Activated naive CD4-positive, alpha-beta T cell treated with anti-CD3 and anti-CD28 coated beads for 36 hours (primary cell): ENCODE measurements at regions of chr5 and their contacts with region 1.

Region 1: GRCh38 chr5:175170899-175171298 is 273.1 kb downstream of the DRD1 start:
- DNase-seq: no peak
- H3K4me3 Mint-ChIP-seq: no peak overlapping the region
- H3K27ac Mint-ChIP-seq: no peak overlapping the region
- H3K4me1 Mint-ChIP-seq: no peaks in the 10 kb centered on the region
- H3K27me3 Mint-ChIP-seq: no peaks in the 10 kb centered on the region

Region 2: DNA sequence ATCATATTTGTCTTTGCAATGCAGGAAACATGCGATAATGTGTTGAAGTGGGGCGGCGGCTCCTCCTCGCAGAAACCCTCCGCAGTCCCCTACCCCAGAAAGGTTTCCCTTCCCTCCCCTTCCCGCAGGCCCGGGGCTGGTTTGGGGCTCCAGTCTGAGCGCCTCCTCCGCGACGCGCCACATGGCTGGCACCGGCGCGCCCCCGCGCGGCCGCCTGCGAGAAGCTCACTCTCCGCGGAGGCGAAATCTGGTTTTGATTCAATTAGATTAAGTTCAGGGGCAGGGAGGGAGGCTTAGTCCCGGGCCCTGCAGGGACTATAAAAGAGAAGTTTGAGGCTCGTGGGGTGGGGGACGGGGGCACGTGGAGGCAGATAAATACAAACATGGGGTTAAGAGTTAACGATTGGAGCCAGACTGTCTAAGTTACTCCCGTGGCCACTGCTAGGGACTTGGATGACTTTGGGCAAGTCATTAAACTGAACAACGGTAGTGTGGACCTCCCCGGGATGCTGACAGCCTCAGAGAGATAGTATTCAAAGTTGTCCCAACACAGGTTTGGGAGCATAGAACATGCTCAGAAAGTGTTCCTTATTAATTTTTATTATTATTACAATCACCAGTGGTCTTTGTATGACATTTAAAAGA is 377.1 kb before region 1 on chr5:
- CTCF ChIA-PET with region 1: no interaction called
- intact Hi-C with region 1: no loop called
- DNase-seq: peak; percentile 59
- H3K4me3 Mint-ChIP-seq: no peak overlapping the region
- H3K27ac Mint-ChIP-seq: no peak overlapping the region
- H3K4me1 Mint-ChIP-seq: peaks cover 2% of the 10 kb centered on the region
- H3K27me3 Mint-ChIP-seq: peaks cover 49% of the 10 kb centered on the region

Region 3: DNA sequence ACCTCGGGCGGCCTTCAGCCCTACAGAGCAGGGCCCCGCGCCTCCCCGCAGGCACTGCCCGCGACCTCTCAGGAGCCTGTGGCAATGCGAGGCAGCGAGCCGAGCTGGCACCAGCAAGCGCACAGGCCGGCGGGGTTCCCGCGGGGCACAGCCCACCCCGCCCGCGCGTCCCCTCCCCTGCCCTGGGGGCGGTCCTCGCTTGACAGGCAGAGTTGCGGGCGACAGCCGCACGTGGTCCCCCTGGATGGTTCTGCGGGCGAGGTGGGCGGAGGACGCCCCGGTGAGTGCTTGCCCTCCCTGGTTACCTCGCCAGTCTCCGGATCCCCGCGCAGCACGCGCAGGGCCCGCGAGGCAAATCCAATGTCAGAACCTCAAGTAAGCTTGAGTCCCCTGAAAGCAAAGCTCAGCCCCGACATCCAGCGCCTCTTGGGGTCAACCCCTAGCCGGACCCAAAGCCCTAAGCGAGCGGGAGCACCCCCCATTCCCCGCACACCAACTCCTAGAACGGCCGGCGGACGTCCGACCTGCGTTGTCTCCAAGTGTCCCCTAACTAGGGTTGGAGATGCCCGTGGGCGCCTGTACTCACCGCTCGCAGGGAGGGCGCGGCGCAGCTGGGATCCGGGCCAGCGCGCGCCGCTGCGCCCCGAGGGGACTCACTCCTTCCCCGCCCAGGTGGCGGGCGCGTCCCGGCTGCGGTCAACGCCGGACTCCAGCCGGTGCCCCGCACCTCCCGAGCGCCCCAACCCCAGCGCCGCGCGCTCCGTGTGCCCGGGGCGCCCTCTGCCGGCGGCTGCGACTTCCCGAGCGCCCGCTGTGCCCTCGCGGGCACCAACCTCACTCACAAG is 273.4 kb after region 1 on chr5 and contains the start of gene DRD1:
- CTCF ChIA-PET with region 1: no interaction called
- intact Hi-C with region 1: loop called (anchors 10 kb)
- DNase-seq: peak; percentile 52
- H3K4me3 Mint-ChIP-seq: peak within 1 kb of the TSS; percentile 57
- H3K27ac Mint-ChIP-seq: no peak within 1 kb of the TSS
- H3K4me1 Mint-ChIP-seq: peaks cover 8% of the 10 kb centered on the region
- H3K27me3 Mint-ChIP-seq: peaks cover 40% of the 10 kb centered on the region
- total RNA-seq, gene DRD1: not detected